ENCODE measurements at regions of chr3 and their contacts with region 1.

Region 1: DNA sequence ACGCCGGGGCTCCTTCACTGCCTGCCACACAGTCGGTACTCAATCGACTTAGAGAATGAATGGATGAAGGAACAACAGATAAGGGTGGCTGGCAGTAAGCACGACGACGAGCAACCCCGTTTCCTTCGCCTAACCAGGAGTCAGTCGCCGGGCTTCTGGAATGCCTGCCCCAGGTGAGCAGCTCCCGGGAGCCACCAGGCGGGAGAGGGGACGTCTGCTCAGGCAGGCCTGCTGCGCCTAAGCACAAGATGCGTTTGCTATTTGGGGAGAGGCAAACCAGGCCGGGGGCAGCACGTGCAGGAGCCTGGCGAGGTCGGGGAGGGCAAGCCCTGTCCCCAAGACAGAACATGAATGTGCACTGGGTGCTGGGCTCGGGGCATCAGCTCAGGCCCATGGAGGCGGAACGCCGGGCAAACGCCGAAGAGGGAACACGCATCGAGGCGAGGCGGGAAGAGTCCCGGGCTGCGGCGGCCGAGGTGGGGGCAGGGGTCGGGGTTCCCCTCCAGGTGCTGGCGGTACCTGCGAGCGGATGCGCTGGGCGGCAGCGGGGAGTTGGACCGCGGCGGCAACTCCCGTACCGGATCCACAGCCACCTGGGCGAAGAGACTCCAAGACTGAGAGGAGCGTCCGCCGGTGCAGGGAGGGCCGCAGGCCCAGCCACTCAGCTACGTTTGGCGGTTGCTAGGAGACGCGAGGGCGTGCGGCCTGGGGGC is at the start of gene CFAP92:
- DNase-seq: peak; percentile 95
- ATAC-seq: peak; percentile 97
- H3K4me3 Mint-ChIP-seq: peak within 1 kb of the TSS; percentile 63
- H3K27ac Mint-ChIP-seq: peak within 1 kb of the TSS; percentile 49
- H3K4me1 Mint-ChIP-seq: peaks cover 32% of the 10 kb centered on the region
- H3K27me3 Mint-ChIP-seq: no peaks in the 10 kb centered on the region
- total RNA-seq, gene CFAP92: 0.64 to 0.88 TPM

Region 2: DNA sequence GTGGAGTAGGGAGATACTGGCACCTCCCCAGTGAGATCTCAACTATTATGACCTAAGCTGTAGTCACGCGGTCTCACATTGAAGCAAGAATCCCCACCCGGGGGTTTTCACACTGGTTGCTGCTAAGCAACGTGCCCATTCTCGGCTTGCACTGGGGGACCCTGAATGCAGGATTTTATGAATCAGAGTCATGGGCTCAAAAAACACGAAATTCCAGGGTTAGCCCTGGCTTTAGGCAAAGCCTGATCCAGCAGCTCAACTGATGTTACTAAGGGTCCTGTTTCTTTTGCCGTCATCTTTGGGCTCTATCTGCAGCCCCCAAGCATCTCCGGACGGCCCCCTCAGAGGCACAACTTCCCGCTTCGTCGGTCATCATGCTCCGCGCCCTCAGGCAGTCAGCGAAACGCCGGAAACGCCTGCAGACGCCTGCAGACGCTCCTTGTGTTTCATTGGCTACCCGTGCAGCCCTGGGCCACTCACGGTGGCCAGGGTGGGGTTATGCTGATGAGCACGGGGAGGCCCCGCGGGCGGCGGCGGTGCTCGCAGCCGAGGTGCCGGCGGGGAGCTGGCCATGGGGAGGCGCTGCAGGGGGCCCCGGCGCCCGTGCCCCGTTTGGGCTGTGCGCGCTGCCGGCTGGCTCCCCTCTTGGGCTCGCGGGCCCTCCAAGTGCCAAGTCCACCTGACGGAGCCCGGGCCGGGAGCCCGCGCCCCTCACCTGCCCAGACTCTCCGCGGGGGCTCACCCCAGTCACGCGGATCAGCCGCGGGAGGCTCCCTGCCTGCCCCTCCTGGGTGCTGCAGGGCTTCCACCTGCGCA is 33.3 kb after region 1 on chr3:
- CTCF ChIA-PET with region 1: interaction called, 7 read pairs
- POLR2A ChIA-PET with region 1: no interaction called
- intact Hi-C with region 1: loop called (anchors 2 kb)
- DNase-seq: peak; percentile 96
- ATAC-seq: peak; percentile 100
- H3K4me3 Mint-ChIP-seq: peak overlapping the region; percentile 72
- H3K27ac Mint-ChIP-seq: peak overlapping the region; percentile 81
- H3K4me1 Mint-ChIP-seq: peaks cover 12% of the 10 kb centered on the region
- H3K27me3 Mint-ChIP-seq: no peaks in the 10 kb centered on the region

Region 3: GRCh38 chr3:129107793-129108192 is 114.2 kb after region 1 on chr3:
- CTCF ChIA-PET with region 1: no interaction called
- POLR2A ChIA-PET with region 1: no interaction called
- intact Hi-C with region 1: no loop called
- DNase-seq: no peak
- ATAC-seq: no peak
- H3K4me3 Mint-ChIP-seq: no peak overlapping the region
- H3K27ac Mint-ChIP-seq: peak overlapping the region; percentile 73
- H3K4me1 Mint-ChIP-seq: peaks cover 86% of the 10 kb centered on the region
- H3K27me3 Mint-ChIP-seq: no peaks in the 10 kb centered on the region

Region 4: GRCh38 chr3:129278439-129278970 is 284.9 kb after region 1 on chr3 and contains the start of gene HMCES:
- CTCF ChIA-PET with region 1: no interaction called
- POLR2A ChIA-PET with region 1: no interaction called
- intact Hi-C with region 1: loop called in 1 of 2 experiments (anchors 1 kb)
- DNase-seq: peak; percentile 98
- ATAC-seq: peak; percentile 84
- H3K4me3 Mint-ChIP-seq: peak within 1 kb of the TSS; percentile 89
- H3K27ac Mint-ChIP-seq: peak within 1 kb of the TSS; percentile 95
- H3K4me1 Mint-ChIP-seq: peaks cover 55% of the 10 kb centered on the region
- H3K27me3 Mint-ChIP-seq: no peaks in the 10 kb centered on the region
- total RNA-seq, gene HMCES: 43.1 to 56.7 TPM